ENCODE measurements at regions of chr10 and their contacts with region 1.

Region 1: GRCh38 chr10:31759799-31760626 is 168.6 kb downstream of the ARHGAP12 start:
- DNase-seq: peak; percentile 95
- H3K4me3 Mint-ChIP-seq: peak overlapping the region; percentile 78
- H3K27ac Mint-ChIP-seq: peak overlapping the region; percentile 75
- H3K4me1 Mint-ChIP-seq: peaks cover 15% of the 10 kb centered on the region
- H3K27me3 Mint-ChIP-seq: no peaks in the 10 kb centered on the region

Region 2: GRCh38 chr10:31745612-31746376 is 14.2 kb before region 1 on chr10:
- CTCF ChIA-PET with region 1: interaction called, 5 read pairs
- POLR2A ChIA-PET with region 1: interaction called, 31 read pairs
- DNase-seq: peak; percentile 64
- H3K4me3 Mint-ChIP-seq: no peak overlapping the region
- H3K27ac Mint-ChIP-seq: peak overlapping the region; percentile 74
- H3K4me1 Mint-ChIP-seq: peaks cover 22% of the 10 kb centered on the region
- H3K27me3 Mint-ChIP-seq: no peaks in the 10 kb centered on the region